OCI-LY7 (cell line): ENCODE measurements at regions of chr7 and their contacts with region 1.

Region 1: GRCh38 chr7:101507791-101508252 is 121.3 kb downstream of the MYL10 start:
- DNase-seq: peak; percentile 87
- H3K4me3 ChIP-seq: peak overlapping the region; percentile 39
- H3K27ac ChIP-seq: no peak overlapping the region
- H3K4me1 ChIP-seq: peaks cover 27% of the 10 kb centered on the region
- CTCF ChIP-seq: peak; percentile 100

Region 2: DNA sequence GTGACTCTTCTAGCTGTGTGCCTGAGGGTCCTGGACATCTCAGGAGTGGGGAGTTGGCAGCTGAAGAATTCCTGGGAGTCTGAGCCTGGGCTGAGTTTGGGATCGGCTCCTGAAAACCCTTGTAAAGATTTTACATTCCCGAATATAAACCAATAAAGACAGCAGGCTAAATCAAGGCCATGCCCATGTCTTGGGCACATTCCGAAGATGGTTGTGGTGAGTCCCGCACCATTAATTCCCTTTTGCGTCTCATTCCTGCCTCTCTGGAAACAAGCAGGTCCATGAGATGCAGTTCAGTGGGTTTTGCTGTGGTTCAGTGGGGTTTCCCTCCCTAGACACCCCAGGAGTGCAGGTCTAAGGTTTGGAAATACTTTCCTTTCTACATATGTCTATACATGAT is 54.2 kb before region 1 on chr7:
- CTCF ChIA-PET with region 1: no interaction called
- POLR2A ChIA-PET with region 1: no interaction called
- intact Hi-C with region 1: loop called (anchors 1 kb)
- DNase-seq: no peak
- H3K4me3 ChIP-seq: no peak overlapping the region
- H3K27ac ChIP-seq: no peak overlapping the region
- H3K4me1 ChIP-seq: no peaks in the 10 kb centered on the region
- CTCF ChIP-seq: no peak